ENCODE measurements at regions of chr7 and their contacts with region 1.

Region 1: DNA sequence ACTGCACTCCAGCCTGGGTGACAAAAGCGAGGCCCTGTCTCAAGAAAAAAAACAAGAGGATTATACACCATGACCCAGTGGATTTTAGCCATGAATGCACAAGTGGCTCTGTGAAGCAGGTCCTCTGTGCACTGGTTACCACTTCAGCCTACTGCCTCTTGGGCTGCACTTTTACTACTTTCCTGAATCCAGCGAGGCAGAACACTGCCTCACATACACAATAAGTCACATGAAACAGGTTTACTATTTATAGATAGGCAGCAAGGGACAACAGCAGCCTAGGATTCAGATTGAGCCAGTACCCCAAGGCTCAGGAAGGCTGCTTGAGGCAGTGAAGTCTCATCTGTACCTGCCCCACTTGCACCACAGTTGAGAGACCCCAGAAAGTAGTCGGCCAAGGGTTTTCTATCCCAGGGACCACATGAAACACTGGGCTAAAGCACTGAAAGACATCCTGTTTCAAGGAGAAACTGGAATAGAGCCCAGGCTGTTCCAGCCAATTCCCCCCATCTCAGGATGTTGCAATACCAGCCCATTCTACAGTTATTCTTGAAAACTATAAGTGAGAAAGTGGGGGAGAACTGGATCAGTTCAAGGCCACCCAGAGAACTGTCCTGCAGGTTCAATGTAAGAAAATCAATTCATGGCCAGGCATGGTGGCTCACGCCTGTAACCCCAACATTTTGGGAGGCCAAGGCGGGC is 10.3 kb upstream of the OGDH start:
- DNase-seq: no peak
- H3K4me3 ChIP-seq: no peak overlapping the region
- H3K27ac ChIP-seq: no peak overlapping the region
- H3K4me1 ChIP-seq: no peaks in the 10 kb centered on the region
- H3K27me3 ChIP-seq: no peaks in the 10 kb centered on the region
- CTCF ChIP-seq: no peak
- POLR2A ChIP-seq: no peak

Region 2: GRCh38 chr7:44539669-44540506 is 56.2 kb before region 1 on chr7:
- intact Hi-C with region 1: loop called (anchors 2 kb)
- DNase-seq: no peak
- H3K4me3 ChIP-seq: no peak overlapping the region
- H3K27ac ChIP-seq: no peak overlapping the region
- H3K4me1 ChIP-seq: peaks cover 0 to 11% of the 10 kb centered on the region in 2 donors
- H3K27me3 ChIP-seq: no peaks in the 10 kb centered on the region
- CTCF ChIP-seq: no peak
- POLR2A ChIP-seq: no peak

Region 3: GRCh38 chr7:44673324-44673723 is 77.2 kb after region 1 on chr7:
- intact Hi-C with region 1: no loop called
- DNase-seq: no peak
- H3K4me3 ChIP-seq: no peak overlapping the region
- H3K27ac ChIP-seq: no peak overlapping the region
- H3K4me1 ChIP-seq: no peaks in the 10 kb centered on the region
- H3K27me3 ChIP-seq: no peaks in the 10 kb centered on the region
- CTCF ChIP-seq: no peak
- POLR2A ChIP-seq: no peak

Region 4: GRCh38 chr7:44914992-44915607 is 319.0 kb after region 1 on chr7:
- intact Hi-C with region 1: loop called (anchors 5 kb)
- DNase-seq: no peak
- H3K4me3 ChIP-seq: no peak overlapping the region
- H3K27ac ChIP-seq: no peak overlapping the region
- H3K4me1 ChIP-seq: peaks cover 9% of the 10 kb centered on the region in 2 donors
- H3K27me3 ChIP-seq: no peaks in the 10 kb centered on the region
- CTCF ChIP-seq: no peak
- POLR2A ChIP-seq: no peak

Region 5: DNA sequence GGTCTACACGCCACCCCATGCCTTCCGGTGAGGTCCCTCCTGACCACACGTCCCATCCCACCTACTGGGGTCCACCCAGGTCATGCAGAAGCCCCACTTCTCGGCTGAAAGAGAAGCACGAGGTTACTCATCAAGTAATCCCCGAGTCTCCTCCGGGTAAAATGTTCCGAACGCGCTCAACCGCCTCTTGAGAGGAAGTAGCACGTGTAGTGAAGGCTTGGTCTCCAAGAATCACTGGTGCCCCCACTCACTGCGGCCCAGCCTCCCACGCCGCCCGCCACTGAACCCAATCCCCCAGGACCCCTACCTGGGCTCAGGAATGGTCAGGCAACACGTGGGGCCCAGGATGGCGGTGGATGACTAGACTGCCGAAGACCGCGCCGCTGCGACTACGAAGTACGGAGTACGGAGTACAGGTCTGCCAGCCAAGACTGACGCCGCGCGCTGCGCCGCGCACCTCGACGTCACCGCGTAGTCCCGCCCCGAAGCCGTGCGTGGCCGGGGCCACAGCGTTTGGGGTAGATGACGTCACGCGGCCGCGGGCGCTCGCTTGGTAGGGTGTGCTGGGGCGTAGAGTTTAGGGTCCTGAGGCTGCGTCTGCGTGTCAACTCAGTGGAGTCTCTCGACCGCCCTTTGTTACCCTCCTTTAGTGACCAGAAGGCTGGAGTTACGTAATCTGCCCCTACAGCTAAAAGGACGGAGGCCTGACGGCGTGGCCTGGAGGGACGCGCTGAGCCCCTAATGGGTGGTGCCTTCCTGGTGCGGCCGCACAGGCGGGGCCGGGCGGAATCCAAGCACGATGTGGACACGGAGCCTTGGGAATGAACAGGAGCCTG is 390.4 kb after region 1 on chr7:
- intact Hi-C with region 1: loop called (anchors 10 kb)
- DNase-seq: peak; percentile 86 to 93
- H3K4me3 ChIP-seq: peak overlapping the region; percentile 55 to 76 (median 59)
- H3K27ac ChIP-seq: peak overlapping the region; percentile 97 to 98
- H3K4me1 ChIP-seq: peaks cover 0 to 6% of the 10 kb centered on the region in 2 donors
- H3K27me3 ChIP-seq: no peaks in the 10 kb centered on the region
- CTCF ChIP-seq: peak in 1 of 3 donors; percentile 11
- POLR2A ChIP-seq: peak; percentile 95

Measured in breast epithelium (tissue), 4 donors.